GM12878 (cell line): ENCODE measurements at regions of chr17 and their contacts with region 1.

Region 1: GRCh38 chr17:78817123-78817522 is 23.5 kb downstream of the USP36 start:
- DNase-seq: no peak
- ATAC-seq: no peak
- H3K4me3 ChIP-seq: no peak overlapping the region
- H3K27ac ChIP-seq: no peak overlapping the region
- H3K4me1 ChIP-seq: no peaks in the 10 kb centered on the region; the same call in 1 of the 2 replicates
- H3K27me3 ChIP-seq: no peaks in the 10 kb centered on the region
- CTCF ChIP-seq: no peak
- EP300 ChIP-seq: no peak
- POLR2A ChIP-seq: no peak
- RAD21 ChIP-seq: no peak

Region 2: DNA sequence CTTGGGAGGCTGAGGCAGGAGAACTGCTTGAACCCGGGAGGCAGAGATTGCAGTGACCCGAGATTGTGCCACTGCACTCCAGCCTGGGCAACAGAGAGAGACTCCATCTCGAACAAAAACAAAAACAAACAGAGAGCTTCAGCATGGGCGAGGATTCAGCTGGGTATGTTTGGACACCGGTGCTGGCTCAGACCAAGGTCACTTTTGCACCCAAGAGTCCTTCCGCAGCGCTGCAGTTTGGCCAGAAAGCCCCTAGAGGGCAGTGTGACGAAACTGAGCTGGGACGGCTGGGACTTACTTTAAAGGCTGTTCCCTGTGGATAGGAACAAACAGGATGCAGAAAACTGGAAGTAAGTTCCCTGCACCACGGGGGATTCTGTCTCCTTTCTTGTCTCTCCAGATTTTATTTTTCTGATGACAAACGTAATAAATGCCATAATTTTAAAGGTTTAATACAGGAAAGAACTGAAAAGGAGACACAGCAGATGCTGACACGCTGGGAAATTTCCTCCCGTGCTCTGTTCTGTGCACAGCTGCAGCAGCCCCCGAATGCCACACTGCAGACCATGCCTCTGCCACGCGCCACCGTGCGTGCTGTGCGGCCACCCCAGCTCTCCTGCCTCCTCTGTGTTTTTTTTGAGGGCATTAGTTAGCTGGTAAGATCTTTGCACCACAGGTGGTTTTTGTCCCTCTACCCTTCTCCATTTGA is 48.7 kb after region 1 on chr17:
- CTCF ChIA-PET with region 1: no interaction called
- POLR2A ChIA-PET with region 1: no interaction called
- RAD21 ChIA-PET with region 1: no interaction called
- SMC1A ChIA-PET with region 1: no interaction called
- in situ Hi-C with region 1: no loop called
- intact Hi-C with region 1: no loop called
- DNase-seq: no peak
- ATAC-seq: peak; percentile 93
- H3K4me3 ChIP-seq: no peak overlapping the region
- H3K27ac ChIP-seq: no peak overlapping the region
- H3K4me1 ChIP-seq: no peaks in the 10 kb centered on the region
- H3K27me3 ChIP-seq: 0 out of 4 replicates have a peak, but pooled peaks cover 0 to 1% of the 10 kb centered on the region in 2 experiments
- CTCF ChIP-seq: peak; percentile 87 to 92 (median 92); a peak in 5 of 6 replicates
- EP300 ChIP-seq: no peak
- POLR2A ChIP-seq: no peak
- RAD21 ChIP-seq: peak; percentile 77

Region 3: GRCh38 chr17:79001190-79002020 is 184.3 kb after region 1 on chr17:
- CTCF ChIA-PET with region 1: no interaction called
- POLR2A ChIA-PET with region 1: interaction called, 12 read pairs
- RAD21 ChIA-PET with region 1: no interaction called
- SMC1A ChIA-PET with region 1: no interaction called
- in situ Hi-C with region 1: no loop called
- intact Hi-C with region 1: no loop called
- DNase-seq: no peak
- ATAC-seq: no peak
- H3K4me3 ChIP-seq: no peak overlapping the region
- H3K27ac ChIP-seq: no peak overlapping the region
- H3K4me1 ChIP-seq: no peaks in the 10 kb centered on the region; the same call in 1 of the 2 replicates
- H3K27me3 ChIP-seq: no peaks in the 10 kb centered on the region
- CTCF ChIP-seq: no peak
- EP300 ChIP-seq: no peak
- POLR2A ChIP-seq: no peak
- RAD21 ChIP-seq: no peak

Region 4: DNA sequence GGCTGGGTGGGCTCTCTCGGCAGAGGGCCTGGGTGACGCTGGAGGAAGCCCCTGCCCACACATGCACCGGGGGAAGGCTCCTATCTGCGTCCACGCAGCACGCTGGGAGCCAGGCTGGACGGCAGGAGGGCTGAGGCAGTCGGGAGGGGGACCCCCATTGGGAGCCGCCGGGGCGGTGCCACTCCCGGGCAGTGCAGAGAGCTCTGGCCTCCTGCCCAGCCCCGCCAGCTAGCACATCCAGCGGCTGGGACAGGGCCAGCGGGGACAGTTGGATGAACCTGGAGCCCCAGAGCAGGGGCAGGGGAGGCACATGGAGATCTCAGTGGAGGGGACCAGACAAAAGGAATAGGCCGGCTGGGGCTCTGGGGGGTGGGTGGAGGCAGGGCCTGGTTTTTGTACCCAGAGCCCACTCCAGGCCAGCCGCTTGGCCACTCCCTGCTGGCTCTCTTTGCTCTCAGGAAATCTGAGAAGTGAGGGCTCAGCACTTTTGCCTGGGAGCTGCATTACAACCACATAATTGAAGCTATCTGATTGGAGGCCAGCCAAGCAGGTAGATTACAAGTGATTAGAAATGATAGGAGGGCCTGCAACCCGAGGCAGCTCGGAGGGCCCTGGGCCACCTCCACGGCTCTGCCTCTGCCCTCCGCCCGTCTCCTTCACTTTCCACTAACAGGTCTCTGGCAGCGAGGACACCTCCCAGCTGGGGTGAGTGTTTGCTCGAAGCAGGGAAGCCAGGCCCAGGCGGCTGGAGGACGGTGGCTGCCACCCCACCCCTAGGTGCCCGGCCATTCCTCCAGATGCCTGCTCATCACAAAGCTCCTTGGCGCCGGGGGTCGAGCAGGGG is 297.6 kb after region 1 on chr17:
- CTCF ChIA-PET with region 1: no interaction called
- POLR2A ChIA-PET with region 1: no interaction called
- RAD21 ChIA-PET with region 1: no interaction called
- SMC1A ChIA-PET with region 1: no interaction called
- in situ Hi-C with region 1: no loop called
- intact Hi-C with region 1: no loop called
- DNase-seq: no peak
- ATAC-seq: no peak
- H3K4me3 ChIP-seq: no peak overlapping the region
- H3K27ac ChIP-seq: no peak overlapping the region
- H3K4me1 ChIP-seq: no peaks in the 10 kb centered on the region
- H3K27me3 ChIP-seq: peaks cover 0 to 3% of the 10 kb centered on the region in 2 experiments; a peak in 2 of 4 replicates
- CTCF ChIP-seq: no peak
- EP300 ChIP-seq: no peak
- POLR2A ChIP-seq: no peak
- RAD21 ChIP-seq: no peak